ENCODE measurements at regions of chr5 and their contacts with region 1.

Region 1: DNA sequence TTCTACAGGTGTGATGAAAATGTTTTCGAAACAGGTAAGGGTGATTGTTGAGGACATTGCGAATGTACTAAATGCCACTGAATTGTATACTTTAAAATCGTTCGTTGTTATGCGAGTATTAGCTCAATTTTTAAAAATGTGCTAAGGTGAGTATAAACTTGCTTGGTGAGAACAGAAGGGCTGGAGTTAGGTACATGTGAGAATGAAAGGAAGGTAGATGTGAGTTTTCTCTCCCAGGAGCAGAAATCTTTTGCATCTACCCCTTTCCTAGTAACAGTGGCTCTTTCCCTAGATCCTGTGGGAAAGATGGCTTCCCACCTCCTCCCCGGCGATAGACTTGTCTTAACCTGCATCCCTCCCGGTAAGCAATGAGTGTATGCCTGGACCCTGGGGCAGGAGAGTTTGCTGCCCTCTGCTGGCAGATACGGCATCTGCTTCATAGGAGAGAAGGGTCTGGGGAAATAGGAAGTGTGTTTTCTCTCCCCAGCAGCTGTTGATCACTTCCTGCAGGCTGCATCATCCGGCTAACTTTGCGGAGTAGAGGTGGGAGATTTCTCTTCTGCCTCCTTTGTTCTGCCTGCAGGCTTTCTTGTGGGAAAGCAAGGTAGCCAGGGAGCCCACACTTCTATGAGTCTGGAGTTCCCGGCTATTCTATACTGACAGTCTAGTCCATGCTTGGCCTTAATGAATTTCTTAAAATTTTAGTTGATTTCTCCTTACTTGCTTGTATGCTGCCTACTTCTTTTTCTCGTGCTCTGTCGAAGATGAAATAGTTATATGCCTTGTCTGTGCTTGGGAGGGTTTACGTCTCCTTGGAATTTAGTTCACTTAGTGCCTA is 373.3 kb upstream of the SEMA6A start:
- DNase-seq: peak; percentile 72
- ATAC-seq: peak; percentile 88
- H3K4me3 Mint-ChIP-seq: no peak overlapping the region
- H3K27ac Mint-ChIP-seq: no peak overlapping the region
- H3K4me1 Mint-ChIP-seq: no peaks in the 10 kb centered on the region
- H3K27me3 Mint-ChIP-seq: no peaks in the 10 kb centered on the region

Region 2: GRCh38 chr5:116137544-116138378 is 810.1 kb before region 1 on chr5:
- CTCF ChIA-PET with region 1: interaction called, 10 read pairs
- POLR2A ChIA-PET with region 1: no interaction called
- DNase-seq: no peak
- ATAC-seq: no peak
- H3K4me3 Mint-ChIP-seq: no peak overlapping the region
- H3K27ac Mint-ChIP-seq: no peak overlapping the region
- H3K4me1 Mint-ChIP-seq: peaks cover 19% of the 10 kb centered on the region
- H3K27me3 Mint-ChIP-seq: no peaks in the 10 kb centered on the region